ENCODE measurements at regions of chr1 and their contacts with region 1.

Region 1: DNA sequence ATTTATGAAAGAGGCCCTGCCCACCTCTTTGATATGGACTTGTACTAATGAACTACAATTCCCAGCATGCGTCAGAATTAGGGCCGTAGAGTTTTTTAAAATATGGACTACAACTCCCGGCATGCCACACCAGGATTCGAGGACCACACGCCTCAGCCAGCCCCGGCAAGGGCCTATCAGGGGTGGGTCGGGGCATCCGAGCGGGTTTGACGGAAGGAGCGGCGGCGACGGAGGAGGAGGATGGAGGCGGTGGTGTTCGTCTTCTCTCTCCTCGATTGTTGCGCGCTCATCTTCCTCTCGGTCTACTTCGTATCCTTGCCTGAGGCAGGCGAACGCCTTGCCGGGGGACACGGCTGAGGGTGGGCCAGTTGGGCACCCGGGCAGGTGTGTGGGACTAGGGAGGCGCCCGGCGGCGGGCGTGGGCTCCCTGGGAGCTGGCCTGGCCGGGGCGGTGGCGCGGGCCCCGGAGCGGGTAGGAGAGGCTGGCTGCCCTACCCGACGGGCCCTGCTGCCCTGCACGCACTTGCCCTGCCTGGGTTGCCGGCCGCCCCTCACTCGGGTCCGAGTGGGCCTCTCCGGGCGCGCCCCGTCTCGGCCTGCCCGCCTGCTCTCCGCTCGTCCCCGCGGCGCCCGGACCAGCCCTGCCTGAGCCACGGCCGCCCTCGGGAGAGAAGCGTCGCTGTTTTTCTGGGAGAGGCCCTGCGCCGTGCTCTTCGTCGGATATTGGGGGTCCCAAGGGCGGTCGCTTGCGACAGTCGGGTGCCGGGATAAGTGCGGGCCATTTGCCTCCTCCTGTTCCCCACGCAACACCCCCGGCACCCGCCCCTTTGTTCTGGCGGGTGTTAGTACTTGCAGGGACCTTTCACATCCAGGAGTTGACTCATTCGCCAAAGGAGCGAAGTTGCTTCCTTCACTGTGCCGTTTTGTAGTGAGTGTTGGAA is at the start of gene CNIH4:
- DNase-seq: peak; percentile 81 to 97 (median 90)
- ATAC-seq: peak; percentile 99
- H3K4me3 ChIP-seq: peak within 1 kb of the TSS; percentile 60 to 78
- H3K4me3 Mint-ChIP-seq: peak within 1 kb of the TSS; percentile 87
- H3K27ac ChIP-seq: peak within 1 kb of the TSS; percentile 63 to 74
- H3K27ac Mint-ChIP-seq: peak within 1 kb of the TSS; percentile 92
- H3K4me1 ChIP-seq: peaks cover 33% of the 10 kb centered on the region
- H3K4me1 Mint-ChIP-seq: peaks cover 53% of the 10 kb centered on the region
- H3K27me3 ChIP-seq: no peaks in the 10 kb centered on the region
- H3K27me3 Mint-ChIP-seq: no peaks in the 10 kb centered on the region
- CTCF ChIP-seq: no peak
- total RNA-seq, gene CNIH4: 26.5 to 28.6 TPM

Region 2: DNA sequence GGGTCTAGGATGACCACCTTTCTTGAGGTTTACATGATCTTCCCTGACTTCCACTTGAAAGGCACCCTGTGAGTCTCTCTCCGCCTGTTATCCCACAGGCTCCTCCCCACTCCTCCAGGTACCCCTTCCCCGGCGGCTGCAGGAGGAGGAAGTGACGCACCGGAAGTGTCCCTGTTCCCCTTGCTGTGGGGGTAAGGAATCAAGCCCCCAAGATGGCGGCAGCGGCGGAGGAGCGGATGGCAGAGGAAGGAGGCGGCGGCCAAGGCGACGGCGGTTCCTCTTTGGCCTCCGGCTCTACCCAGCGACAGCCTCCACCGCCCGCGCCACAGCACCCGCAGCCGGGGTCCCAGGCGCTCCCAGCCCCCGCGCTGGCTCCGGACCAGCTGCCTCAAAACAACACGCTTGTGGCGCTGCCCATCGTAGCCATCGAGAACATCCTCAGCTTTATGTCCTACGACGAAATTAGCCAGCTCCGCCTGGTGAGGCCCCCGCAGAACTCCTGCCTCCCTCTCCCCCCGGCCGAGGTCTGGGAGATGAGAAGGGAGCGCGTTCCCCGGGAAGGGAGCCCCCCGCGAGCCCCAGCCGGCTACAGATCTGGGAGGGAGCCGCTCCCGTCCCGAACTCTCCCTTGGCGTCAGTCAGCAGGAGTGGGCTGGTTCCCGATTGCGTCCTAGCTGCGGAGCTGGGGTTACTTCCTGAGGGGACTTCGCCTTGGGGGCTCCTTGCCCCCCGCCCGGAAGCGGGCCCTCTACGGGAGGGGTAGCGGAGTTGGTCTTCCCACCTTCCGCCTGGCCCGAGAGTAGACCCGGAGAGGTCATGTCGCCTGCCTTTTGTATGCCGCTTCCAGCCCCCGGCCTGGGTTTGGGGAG is 242.8 kb before region 1 on chr1 and contains the start of gene FBXO28:
- CTCF ChIA-PET with region 1: interaction called, 4 read pairs
- POLR2A ChIA-PET with region 1: no interaction called
- intact Hi-C with region 1: loop called (anchors 1 kb)
- DNase-seq: peak; percentile 86 to 96 (median 94)
- ATAC-seq: peak; percentile 92
- H3K4me3 ChIP-seq: peak within 1 kb of the TSS; percentile 78 to 82
- H3K4me3 Mint-ChIP-seq: peak within 1 kb of the TSS; percentile 92
- H3K27ac ChIP-seq: peak within 1 kb of the TSS; percentile 94 to 97
- H3K27ac Mint-ChIP-seq: peak within 1 kb of the TSS; percentile 95
- H3K4me1 ChIP-seq: peaks cover 22% of the 10 kb centered on the region
- H3K4me1 Mint-ChIP-seq: peaks cover 34% of the 10 kb centered on the region
- H3K27me3 ChIP-seq: no peaks in the 10 kb centered on the region
- H3K27me3 Mint-ChIP-seq: peaks cover 12% of the 10 kb centered on the region
- CTCF ChIP-seq: no peak
- total RNA-seq, gene FBXO28: 43.4 to 44.2 TPM

Region 3: DNA sequence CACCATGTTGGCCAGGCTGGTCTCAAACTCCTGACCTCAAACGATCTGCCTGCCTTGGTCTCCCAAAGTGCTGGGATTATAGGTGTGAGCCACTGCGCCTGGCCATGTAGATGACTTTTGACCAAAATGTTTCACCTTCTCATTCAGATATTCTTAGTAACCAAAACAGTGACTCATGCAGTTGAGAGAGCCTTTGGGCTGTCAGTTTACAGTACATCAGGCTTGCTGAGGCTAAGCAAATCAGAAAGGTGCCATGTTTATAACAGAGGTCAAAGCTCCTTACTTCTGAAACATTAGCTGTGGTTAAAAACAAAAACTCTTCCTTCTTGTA is 20.7 kb after region 1 on chr1:
- CTCF ChIA-PET with region 1: no interaction called
- POLR2A ChIA-PET with region 1: interaction called, 4 read pairs
- intact Hi-C with region 1: loop called in 1 of 2 experiments (anchors 2 kb)
- DNase-seq: peak in 4 of 9 experiments; percentile 7 to 62 (median 29)
- ATAC-seq: peak; percentile 59
- H3K4me3 ChIP-seq: no peak overlapping the region
- H3K4me3 Mint-ChIP-seq: peak overlapping the region; percentile 40
- H3K27ac ChIP-seq: peak overlapping the region in 1 of 2 experiments; percentile 69
- H3K27ac Mint-ChIP-seq: peak overlapping the region; percentile 87
- H3K4me1 ChIP-seq: peaks cover 85% of the 10 kb centered on the region
- H3K4me1 Mint-ChIP-seq: peaks cover 90% of the 10 kb centered on the region
- H3K27me3 ChIP-seq: no peaks in the 10 kb centered on the region
- H3K27me3 Mint-ChIP-seq: no peaks in the 10 kb centered on the region
- CTCF ChIP-seq: no peak

Measured in CD8-positive, alpha-beta T cell (primary cell).